ENCODE measurements at regions of chr22 and their contacts with region 1.

Region 1: DNA sequence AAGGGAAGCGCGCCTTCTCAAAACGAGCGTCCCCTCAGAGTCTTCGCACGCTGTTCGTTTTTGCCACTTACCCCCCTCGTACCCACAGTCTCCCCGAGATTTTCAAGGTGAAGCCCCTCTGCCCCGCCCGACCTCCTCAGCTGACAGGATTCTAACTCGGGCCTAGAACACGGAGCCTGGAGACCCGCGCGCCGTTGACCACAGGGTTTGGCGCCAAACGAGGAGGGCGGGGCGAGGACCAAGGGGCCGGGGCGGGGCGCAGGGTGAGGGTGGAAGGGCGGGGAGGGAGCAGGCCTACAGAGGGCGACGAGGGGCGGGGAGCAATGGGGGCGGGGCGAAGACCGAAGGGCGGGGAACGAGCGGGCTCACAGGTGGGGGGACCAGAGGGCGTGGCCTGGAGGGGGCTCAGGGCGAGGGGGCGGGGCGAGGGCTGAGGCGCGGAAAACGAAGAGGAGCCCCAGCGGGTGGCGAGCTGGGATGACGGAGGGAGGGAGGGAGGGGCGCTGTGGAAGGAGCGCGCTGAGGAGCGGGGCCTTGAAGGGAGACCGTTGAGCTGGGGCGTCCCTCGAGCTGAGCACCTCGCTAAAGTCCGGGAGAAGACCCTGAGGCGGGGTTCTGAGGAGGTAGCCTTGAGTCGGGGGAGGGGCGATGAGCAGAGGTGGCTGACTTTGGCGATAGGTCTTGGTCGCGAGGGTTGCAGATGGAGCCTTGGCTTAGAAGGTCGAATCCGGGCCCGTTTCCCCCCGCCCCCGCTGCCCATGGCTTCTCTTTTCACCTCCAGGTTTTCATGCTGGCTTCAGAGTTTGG is at the start of gene DMC1:
- DNase-seq: peak; percentile 97
- H3K4me3 Mint-ChIP-seq: peak within 1 kb of the TSS; percentile 94
- H3K27ac Mint-ChIP-seq: peak within 1 kb of the TSS; percentile 92
- H3K4me1 Mint-ChIP-seq: peaks cover 22% of the 10 kb centered on the region
- H3K27me3 Mint-ChIP-seq: peaks cover 3% of the 10 kb centered on the region
- total RNA-seq, gene DMC1: 14.2 and 14.3 TPM in 2 replicates

Region 2: GRCh38 chr22:38104084-38104483 is 466.1 kb before region 1 on chr22:
- intact Hi-C with region 1: loop called (anchors 10 kb)
- DNase-seq: no peak
- H3K4me3 Mint-ChIP-seq: no peak overlapping the region
- H3K27ac Mint-ChIP-seq: no peak overlapping the region
- H3K4me1 Mint-ChIP-seq: peaks cover 6% of the 10 kb centered on the region
- H3K27me3 Mint-ChIP-seq: no peaks in the 10 kb centered on the region

Region 3: GRCh38 chr22:38317122-38317994 is 252.8 kb before region 1 on chr22 and contains the start of gene CSNK1E:
- intact Hi-C with region 1: loop called (anchors 10 kb)
- DNase-seq: peak; percentile 94
- H3K4me3 Mint-ChIP-seq: peak within 1 kb of the TSS; percentile 92
- H3K27ac Mint-ChIP-seq: peak within 1 kb of the TSS; percentile 92
- H3K4me1 Mint-ChIP-seq: peaks cover 41% of the 10 kb centered on the region
- H3K27me3 Mint-ChIP-seq: no peaks in the 10 kb centered on the region
- total RNA-seq, gene CSNK1E: 157 and 159 TPM in 2 replicates

Region 4: DNA sequence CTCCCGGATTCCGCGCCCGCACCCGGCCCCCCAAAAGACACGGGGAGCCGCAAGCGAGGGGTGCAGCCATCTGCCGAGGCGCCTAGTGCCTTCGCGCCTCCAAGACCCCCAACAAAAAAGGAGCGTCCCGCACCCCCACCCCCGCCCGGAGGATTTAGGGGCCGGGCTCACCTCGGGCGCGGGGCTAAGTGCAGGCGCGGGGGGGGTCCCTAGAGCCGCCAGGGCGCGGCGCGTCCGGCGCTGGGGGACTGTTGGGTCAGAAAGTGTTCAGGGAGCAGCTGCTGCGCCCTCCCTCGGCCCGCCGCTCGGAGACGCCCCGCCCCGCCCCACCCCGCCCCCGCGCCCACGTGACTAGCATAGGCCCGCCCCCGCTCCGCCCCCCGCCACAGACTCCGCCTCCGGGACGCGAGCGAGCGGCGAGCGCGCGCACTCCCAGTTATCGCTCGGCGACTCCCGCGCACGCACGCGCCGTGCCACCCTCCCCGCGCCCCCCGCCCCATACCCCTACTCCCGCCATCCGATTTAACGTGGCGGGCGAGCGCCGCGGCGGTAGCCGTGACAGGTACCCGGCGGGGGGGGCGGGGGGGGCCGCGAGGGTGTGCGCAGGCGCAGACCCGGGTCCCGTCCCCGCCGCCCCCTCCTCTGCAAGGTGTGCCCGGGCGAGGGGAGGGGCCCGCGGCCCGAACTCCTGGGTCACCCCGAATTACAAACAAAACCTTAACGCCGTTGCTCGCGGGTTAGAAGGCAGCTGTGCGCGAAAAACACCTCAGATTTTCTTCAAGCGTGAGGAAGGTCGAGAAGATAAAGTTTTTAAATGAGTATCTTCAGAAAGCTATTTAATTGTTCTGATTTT is 171.3 kb before region 1 on chr22:
- intact Hi-C with region 1: loop called (anchors 1 kb)
- DNase-seq: peak; percentile 95
- H3K4me3 Mint-ChIP-seq: peak overlapping the region; percentile 85
- H3K27ac Mint-ChIP-seq: peak overlapping the region; percentile 66
- H3K4me1 Mint-ChIP-seq: peaks cover 31% of the 10 kb centered on the region
- H3K27me3 Mint-ChIP-seq: peaks cover 23% of the 10 kb centered on the region

Region 5: GRCh38 chr22:38412435-38413084 is 157.6 kb before region 1 on chr22:
- intact Hi-C with region 1: loop called (anchors 2 kb)
- DNase-seq: peak; percentile 84
- H3K4me3 Mint-ChIP-seq: peak overlapping the region; percentile 15
- H3K27ac Mint-ChIP-seq: no peak overlapping the region
- H3K4me1 Mint-ChIP-seq: no peaks in the 10 kb centered on the region
- H3K27me3 Mint-ChIP-seq: peaks cover 4% of the 10 kb centered on the region

Region 6: GRCh38 chr22:38656256-38657044 is 86.3 kb after region 1 on chr22 and contains the starts of genes CBY1 and FAM227A:
- intact Hi-C with region 1: no loop called
- DNase-seq: peak; percentile 96
- H3K4me3 Mint-ChIP-seq: peak within 1 kb of the TSS; percentile 93
- H3K27ac Mint-ChIP-seq: peak within 1 kb of the TSS; percentile 97
- H3K4me1 Mint-ChIP-seq: peaks cover 11% of the 10 kb centered on the region
- H3K27me3 Mint-ChIP-seq: no peaks in the 10 kb centered on the region
- total RNA-seq, gene CBY1: 8.4 and 13.3 TPM in 2 replicates
- total RNA-seq, gene FAM227A: 0.30 and 0.71 TPM in 2 replicates